Posterior cingulate gyrus (tissue), 11 donors: ENCODE measurements at regions of chr3 and their contacts with region 1.

Region 1: DNA sequence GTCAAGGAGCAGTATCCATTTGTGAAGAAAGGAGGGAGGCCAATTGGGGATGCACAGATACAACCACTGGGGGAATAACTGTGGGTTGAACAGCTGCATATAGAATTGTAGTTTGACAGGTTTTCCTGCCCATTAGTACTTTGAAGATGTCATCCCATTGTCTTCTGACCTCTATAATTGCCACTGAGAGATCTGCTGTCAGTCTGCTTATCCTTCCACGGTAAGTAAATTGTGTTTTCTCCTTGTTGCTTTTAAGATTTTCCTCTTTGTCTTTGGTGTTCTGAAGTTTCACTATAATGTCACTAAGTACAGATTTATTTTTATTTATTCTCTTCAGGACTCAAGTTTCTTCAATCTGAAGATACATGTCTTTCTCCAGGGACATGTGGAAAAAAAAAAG is 56.6 kb downstream of the MOBP start:
- DNase-seq: no peak

Region 2: DNA sequence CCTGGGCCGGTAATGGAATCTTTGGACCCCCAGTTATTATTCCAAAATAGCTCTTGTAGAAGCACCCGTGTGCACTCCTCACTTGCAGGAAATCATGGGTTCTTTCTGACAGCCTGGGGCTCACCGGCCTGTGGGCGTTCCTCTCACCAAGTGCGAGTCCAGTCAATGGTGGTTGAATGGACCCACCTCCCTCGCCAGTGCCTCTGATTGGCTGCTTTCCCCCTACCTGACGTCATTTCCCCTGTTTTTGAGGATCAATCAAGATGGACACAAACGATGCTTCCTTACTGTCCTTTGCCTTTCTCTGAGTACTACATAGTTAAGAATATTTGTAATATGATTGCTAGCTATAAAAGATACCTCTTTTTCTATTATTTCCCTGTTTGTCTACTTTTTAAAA is 38.6 kb before region 1 on chr3:
- intact Hi-C with region 1: loop called (anchors 1 kb)
- DNase-seq: peak in 3 of 10 donors; percentile 38 to 90 (median 59)